ENCODE measurements at regions of chr2 and their contacts with region 1.

Region 1: GRCh38 chr2:9555297-9556141 is at the start of gene ADAM17:
- DNase-seq: peak; percentile 95
- H3K4me3 Mint-ChIP-seq: peak within 1 kb of the TSS; percentile 92
- H3K27ac Mint-ChIP-seq: peak within 1 kb of the TSS; percentile 94
- H3K4me1 Mint-ChIP-seq: peaks cover 39% of the 10 kb centered on the region
- H3K27me3 Mint-ChIP-seq: no peaks in the 10 kb centered on the region
- CTCF ChIP-seq: peak; percentile 43
- total RNA-seq, gene ADAM17: 44.3 and 47.3 TPM in 2 replicates

Region 2: DNA sequence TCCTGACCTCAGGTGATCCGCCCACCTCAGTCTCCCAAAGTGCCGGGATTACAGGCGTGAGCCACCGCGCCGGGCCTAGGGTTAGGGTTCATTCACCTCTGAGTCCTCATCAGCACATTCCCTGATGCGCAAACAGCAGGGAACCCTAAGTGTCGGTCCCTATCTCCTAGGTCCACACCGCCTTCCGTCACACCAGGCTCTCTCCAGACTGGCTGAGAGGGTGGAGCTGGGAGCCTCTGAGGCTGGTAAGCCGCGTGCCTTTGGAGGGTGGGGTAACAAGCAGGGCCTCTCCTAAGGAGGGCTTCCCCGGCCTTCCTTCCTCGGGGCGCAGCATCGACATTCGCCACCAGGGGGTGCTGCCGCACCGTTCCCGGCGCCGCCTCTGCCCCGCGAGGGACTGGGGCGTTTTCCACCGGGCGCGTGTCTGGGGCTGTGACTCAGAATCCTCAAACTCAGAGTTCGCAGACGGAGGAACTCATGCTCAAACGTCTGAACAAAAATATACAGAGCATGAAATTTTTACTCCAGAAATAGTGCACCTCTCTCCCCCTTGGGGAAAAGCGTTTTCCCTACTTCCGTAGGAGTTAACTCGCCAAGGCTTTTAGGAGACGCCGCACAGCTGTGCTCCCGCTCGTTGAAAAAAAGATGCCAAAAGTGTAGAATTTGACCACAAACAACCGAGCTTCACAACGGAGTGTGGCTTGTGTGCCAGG is 412.8 kb before region 1 on chr2:
- CTCF ChIA-PET with region 1: no interaction called
- POLR2A ChIA-PET with region 1: no interaction called
- intact Hi-C with region 1: loop called (anchors 10 kb)
- DNase-seq: peak; percentile 84
- H3K4me3 Mint-ChIP-seq: peak overlapping the region; percentile 44
- H3K27ac Mint-ChIP-seq: peak overlapping the region; percentile 23
- H3K4me1 Mint-ChIP-seq: peaks cover 20% of the 10 kb centered on the region
- H3K27me3 Mint-ChIP-seq: no peaks in the 10 kb centered on the region
- CTCF ChIP-seq: peak; percentile 96

Region 3: GRCh38 chr2:9291331-9291730 is 264.2 kb before region 1 on chr2:
- CTCF ChIA-PET with region 1: no interaction called
- POLR2A ChIA-PET with region 1: no interaction called
- intact Hi-C with region 1: no loop called
- DNase-seq: no peak
- H3K4me3 Mint-ChIP-seq: no peak overlapping the region
- H3K27ac Mint-ChIP-seq: no peak overlapping the region
- H3K4me1 Mint-ChIP-seq: peaks cover 42% of the 10 kb centered on the region
- H3K27me3 Mint-ChIP-seq: no peaks in the 10 kb centered on the region
- CTCF ChIP-seq: no peak

Region 4: DNA sequence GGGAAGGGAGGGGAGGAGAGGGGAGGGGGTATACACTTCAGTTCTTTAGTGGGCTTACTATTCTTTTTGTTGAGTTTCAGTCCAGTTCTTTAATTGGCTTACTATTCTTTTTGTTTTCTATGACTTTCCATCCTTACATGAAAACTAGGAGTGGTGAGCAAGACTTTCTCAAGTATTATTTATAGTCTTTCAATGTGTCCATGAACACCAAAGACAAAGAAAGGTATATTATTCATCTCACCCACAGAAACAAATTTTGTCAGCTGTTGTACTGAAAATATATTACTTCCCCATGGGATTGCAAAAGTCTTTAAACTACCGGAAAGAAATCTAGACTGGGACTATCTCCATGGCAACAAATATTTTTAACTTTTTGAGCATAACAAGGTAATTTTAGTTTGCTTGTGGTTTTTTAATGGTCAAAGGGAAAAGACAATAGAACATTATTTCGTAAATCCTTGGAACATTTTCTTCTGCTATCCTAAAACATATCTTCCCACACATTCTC is 17.5 kb before region 1 on chr2:
- CTCF ChIA-PET with region 1: interaction called, 3 read pairs
- POLR2A ChIA-PET with region 1: interaction called, 41 read pairs
- intact Hi-C with region 1: no loop called
- DNase-seq: peak; percentile 85
- H3K4me3 Mint-ChIP-seq: no peak overlapping the region
- H3K27ac Mint-ChIP-seq: peak overlapping the region; percentile 79
- H3K4me1 Mint-ChIP-seq: peaks cover 14% of the 10 kb centered on the region
- H3K27me3 Mint-ChIP-seq: no peaks in the 10 kb centered on the region
- CTCF ChIP-seq: no peak

Region 5: GRCh38 chr2:9594366-9595054 is 39.0 kb after region 1 on chr2:
- CTCF ChIA-PET with region 1: interaction called, 3 read pairs
- POLR2A ChIA-PET with region 1: interaction called, 21 read pairs
- intact Hi-C with region 1: no loop called
- DNase-seq: peak; percentile 89
- H3K4me3 Mint-ChIP-seq: no peak overlapping the region
- H3K27ac Mint-ChIP-seq: peak overlapping the region; percentile 55
- H3K4me1 Mint-ChIP-seq: peaks cover 21% of the 10 kb centered on the region
- H3K27me3 Mint-ChIP-seq: no peaks in the 10 kb centered on the region
- CTCF ChIP-seq: no peak

Region 6: GRCh38 chr2:9638532-9638931 is 83.0 kb after region 1 on chr2:
- CTCF ChIA-PET with region 1: no interaction called
- POLR2A ChIA-PET with region 1: interaction called, 118 read pairs
- intact Hi-C with region 1: no loop called
- DNase-seq: peak; percentile 89
- H3K4me3 Mint-ChIP-seq: peak overlapping the region; percentile 31
- H3K27ac Mint-ChIP-seq: peak overlapping the region; percentile 63
- H3K4me1 Mint-ChIP-seq: peaks cover 50% of the 10 kb centered on the region
- H3K27me3 Mint-ChIP-seq: no peaks in the 10 kb centered on the region
- CTCF ChIP-seq: no peak

Region 7: GRCh38 chr2:9753276-9753600 is 197.7 kb after region 1 on chr2:
- CTCF ChIA-PET with region 1: interaction called, 5 read pairs
- POLR2A ChIA-PET with region 1: interaction called, 27 read pairs
- intact Hi-C with region 1: loop called (anchors 2 kb)
- DNase-seq: peak; percentile 97
- H3K4me3 Mint-ChIP-seq: peak overlapping the region; percentile 69
- H3K27ac Mint-ChIP-seq: peak overlapping the region; percentile 82
- H3K4me1 Mint-ChIP-seq: peaks cover 36% of the 10 kb centered on the region
- H3K27me3 Mint-ChIP-seq: no peaks in the 10 kb centered on the region
- CTCF ChIP-seq: no peak

Region 8: DNA sequence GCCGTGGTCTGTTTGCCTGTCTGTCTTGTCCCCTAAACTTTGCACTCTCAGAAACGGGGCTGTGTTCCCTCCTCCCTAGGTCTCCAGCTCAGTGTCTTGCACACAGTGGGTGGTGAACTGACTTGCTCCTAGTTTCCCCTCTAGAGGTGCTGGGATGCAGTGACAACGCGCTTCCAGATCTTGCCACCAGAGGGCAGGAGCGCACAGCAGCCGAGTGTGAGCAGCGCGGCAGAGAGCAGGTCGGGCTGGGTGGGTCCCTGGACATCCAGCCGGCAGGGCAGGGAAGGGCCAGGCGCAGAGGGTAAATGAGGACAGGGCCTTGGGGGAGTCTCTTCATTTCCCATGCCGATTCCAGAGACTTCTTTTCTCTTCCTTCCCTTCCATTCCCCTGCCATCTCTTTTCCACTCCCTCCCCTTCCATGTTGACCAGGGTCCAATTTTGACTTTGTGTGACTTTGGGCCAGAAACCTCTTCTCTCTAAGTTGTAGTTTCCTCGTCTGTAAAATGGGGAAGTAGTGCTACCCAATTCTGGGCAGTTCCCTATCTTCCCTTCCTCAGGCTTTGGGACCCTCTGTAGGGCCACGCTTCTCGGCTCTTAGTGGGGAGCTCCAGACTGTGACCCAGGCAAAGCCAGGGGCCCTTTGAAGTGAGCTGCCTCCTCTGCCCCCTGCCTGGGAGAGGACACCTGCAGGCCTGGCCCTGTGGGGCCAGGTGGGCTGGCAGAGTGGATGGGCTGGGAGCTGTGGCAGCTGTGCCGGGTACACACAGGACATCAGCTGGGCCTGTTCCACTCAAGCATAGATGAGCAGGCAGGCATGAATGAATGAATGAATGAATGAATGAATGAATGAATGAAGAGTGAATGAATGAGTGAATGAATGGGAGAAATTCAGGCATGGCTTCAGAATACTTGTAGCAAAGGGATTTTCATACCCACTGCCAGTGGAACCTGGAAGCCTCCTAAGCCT is 244.4 kb after region 1 on chr2:
- CTCF ChIA-PET with region 1: interaction called, 5 read pairs
- POLR2A ChIA-PET with region 1: interaction called, 20 read pairs
- intact Hi-C with region 1: no loop called
- DNase-seq: peak; percentile 87
- H3K4me3 Mint-ChIP-seq: peak overlapping the region; percentile 35
- H3K27ac Mint-ChIP-seq: peak overlapping the region; percentile 46
- H3K4me1 Mint-ChIP-seq: peaks cover 41% of the 10 kb centered on the region
- H3K27me3 Mint-ChIP-seq: no peaks in the 10 kb centered on the region
- CTCF ChIP-seq: peak; percentile 95